ENCODE measurements at regions of chr10 and their contacts with region 1.

Region 1: DNA sequence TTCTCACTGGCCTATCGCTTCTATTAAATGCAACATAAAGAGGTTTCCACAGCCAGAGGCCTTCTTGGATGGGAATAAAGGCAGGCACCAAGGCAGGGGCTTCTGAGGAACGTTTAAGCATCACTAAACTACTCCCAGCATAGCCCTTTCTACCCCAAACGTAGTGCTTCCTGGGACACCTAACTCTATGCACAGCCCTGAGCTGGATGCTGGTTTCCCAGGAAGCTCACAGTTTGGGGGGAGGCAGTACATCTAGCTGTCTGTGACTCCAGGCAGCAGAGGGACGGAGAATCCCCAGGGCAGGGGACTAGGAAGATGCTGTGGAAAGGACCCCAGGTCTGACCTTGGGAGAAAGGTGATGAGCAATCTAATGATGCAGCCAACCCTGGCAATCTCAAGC is 192.8 kb upstream of the ZMIZ1 start:
- DNase-seq: no peak
- H3K4me3 ChIP-seq: no peak overlapping the region
- H3K27ac ChIP-seq: no peak overlapping the region
- H3K4me1 ChIP-seq: no peaks in the 10 kb centered on the region
- H3K27me3 ChIP-seq: no peaks in the 10 kb centered on the region
- CTCF ChIP-seq: no peak

Region 2: DNA sequence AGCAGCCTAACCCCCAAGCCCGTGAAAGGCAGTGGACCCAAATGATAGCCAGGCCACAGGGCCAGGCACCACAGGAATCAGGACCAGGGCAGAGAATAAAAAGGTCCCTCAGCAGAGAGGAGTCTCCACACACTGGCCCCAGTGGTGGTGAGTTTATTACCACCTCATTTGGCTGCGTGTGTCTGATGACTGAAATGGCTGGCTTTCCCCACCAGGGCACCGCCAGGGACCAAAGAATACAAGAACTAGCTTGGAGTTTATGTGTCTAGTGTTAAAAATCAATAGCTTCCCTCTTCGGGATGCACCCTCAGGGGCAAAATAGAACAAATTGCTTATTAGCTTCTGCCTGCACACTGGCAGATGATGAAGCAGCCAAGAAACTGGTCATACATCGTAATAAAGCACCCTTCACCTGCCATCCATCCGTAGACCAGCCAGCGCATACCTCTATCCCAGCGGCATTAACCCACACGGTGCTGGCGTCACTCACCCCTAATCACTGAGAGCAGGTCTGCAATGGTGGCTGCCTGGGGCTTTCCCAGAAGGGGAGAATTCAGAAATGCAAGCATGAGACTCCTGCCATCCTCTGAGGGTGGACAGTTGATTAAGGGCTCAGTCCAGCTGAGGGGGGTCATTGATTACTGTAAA is 30.8 kb before region 1 on chr10:
- CTCF ChIA-PET with region 1: no interaction called
- dilution Hi-C with region 1: loop called (anchors 5 kb)
- in situ Hi-C with region 1: no loop called
- intact Hi-C with region 1: no loop called
- DNase-seq: no peak
- H3K4me3 ChIP-seq: no peak overlapping the region
- H3K27ac ChIP-seq: no peak overlapping the region
- H3K4me1 ChIP-seq: no peaks in the 10 kb centered on the region
- H3K27me3 ChIP-seq: no peaks in the 10 kb centered on the region
- CTCF ChIP-seq: no peak

Region 3: GRCh38 chr10:78925800-78926319 is 49.9 kb after region 1 on chr10:
- CTCF ChIA-PET with region 1: no interaction called
- dilution Hi-C with region 1: loop called (anchors 5 kb)
- in situ Hi-C with region 1: no loop called
- intact Hi-C with region 1: no loop called
- DNase-seq: peak; percentile 97
- H3K4me3 ChIP-seq: no peak overlapping the region
- H3K27ac ChIP-seq: no peak overlapping the region
- H3K4me1 ChIP-seq: peaks cover 23% of the 10 kb centered on the region
- H3K27me3 ChIP-seq: no peaks in the 10 kb centered on the region
- CTCF ChIP-seq: no peak

Region 4: GRCh38 chr10:78937800-78938694 is 62.1 kb after region 1 on chr10:
- CTCF ChIA-PET with region 1: no interaction called
- dilution Hi-C with region 1: no loop called
- in situ Hi-C with region 1: no loop called
- intact Hi-C with region 1: no loop called
- DNase-seq: no peak
- H3K4me3 ChIP-seq: no peak overlapping the region
- H3K27ac ChIP-seq: no peak overlapping the region
- H3K4me1 ChIP-seq: no peaks in the 10 kb centered on the region
- H3K27me3 ChIP-seq: peaks cover 2% of the 10 kb centered on the region
- CTCF ChIP-seq: no peak